Ascending aorta (tissue), 2 donors: ENCODE measurements at regions of chr10 and their contacts with region 1.

Region 1: DNA sequence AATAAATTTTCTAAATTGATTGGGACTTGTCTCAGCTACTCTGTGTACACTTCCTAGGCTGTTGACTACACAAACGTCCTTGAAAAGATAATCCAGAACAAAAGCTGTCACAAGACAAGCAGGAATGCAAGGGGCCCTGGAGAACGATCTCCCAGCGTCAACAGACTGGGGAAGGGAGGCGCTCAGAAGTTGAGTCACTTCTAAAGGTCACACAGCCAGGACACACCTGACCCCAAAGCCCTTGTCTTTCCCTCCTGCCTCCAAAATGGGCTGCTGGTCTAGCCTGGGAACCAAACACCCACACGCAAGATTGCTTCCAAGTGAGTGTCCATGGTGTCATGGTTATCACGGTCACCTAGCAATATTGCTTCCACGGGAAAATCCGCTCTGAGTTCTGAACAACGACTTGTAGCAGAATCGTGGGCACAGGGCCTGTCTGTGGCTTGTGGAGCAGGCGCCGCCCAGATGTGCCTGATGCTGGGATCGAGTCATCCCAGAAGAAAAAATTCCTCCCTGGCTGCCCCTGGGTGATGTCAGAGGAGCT is 49.8 kb downstream of the SPOCK2 start:
- DNase-seq: no peak
- H3K4me3 ChIP-seq: no peak overlapping the region
- H3K27ac ChIP-seq: no peak overlapping the region
- H3K4me1 ChIP-seq: no peaks in the 10 kb centered on the region
- H3K27me3 ChIP-seq: no peaks in the 10 kb centered on the region
- CTCF ChIP-seq: no peak

Region 2: DNA sequence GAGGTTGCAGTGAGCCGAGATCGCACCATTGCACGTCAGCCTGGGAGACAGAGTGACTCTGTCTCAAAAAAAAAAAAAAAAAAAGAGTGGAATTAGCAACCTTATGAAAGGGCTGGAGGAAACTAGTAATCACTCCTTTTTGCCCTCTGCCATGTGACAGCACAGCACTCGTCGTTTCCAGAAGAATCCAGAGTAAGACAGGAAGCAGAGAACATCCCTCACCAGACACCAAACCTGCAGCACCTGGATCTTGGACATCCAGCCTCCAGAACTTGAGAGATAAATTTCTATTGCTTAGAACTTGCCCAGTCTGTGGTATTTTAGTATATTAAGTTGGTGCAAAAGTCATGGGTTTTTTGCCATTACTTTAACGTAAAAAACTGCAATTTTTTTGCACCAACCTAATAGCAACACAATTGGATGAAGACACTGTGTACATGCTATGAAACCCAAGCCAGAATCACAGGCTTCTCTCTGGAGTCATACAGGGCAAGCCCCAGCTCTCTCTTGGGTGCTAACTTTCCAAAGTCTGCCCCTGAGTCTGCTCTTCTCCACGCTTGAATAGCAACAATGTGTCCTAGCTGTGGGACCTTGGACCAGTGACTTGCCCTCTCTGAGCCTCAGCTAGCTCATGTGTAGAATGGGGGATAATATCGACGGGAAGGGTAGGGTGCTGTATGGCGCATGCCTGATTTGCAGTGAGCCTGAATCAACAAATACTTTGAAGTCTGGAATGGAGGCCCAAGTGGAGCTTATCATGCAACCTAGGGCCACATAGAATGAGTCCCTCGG is 19.2 kb before region 1 on chr10:
- intact Hi-C with region 1: loop called (anchors 2 kb)
- DNase-seq: no peak
- H3K4me3 ChIP-seq: no peak overlapping the region
- H3K27ac ChIP-seq: no peak overlapping the region
- H3K4me1 ChIP-seq: peaks cover 3 to 40% of the 10 kb centered on the region in 2 donors
- H3K27me3 ChIP-seq: no peaks in the 10 kb centered on the region
- CTCF ChIP-seq: no peak

Region 3: GRCh38 chr10:72024596-72024995 is 13.9 kb before region 1 on chr10:
- intact Hi-C with region 1: loop called (anchors 2 kb)
- DNase-seq: no peak
- H3K4me3 ChIP-seq: no peak overlapping the region
- H3K27ac ChIP-seq: no peak overlapping the region
- H3K4me1 ChIP-seq: peaks cover 0 to 17% of the 10 kb centered on the region in 2 donors
- H3K27me3 ChIP-seq: no peaks in the 10 kb centered on the region
- CTCF ChIP-seq: no peak

Region 4: GRCh38 chr10:72292223-72292691 is 253.7 kb after region 1 on chr10:
- intact Hi-C with region 1: no loop called
- DNase-seq: no peak
- H3K4me3 ChIP-seq: no peak overlapping the region
- H3K27ac ChIP-seq: no peak overlapping the region
- H3K4me1 ChIP-seq: peaks cover 0 to 8% of the 10 kb centered on the region in 2 donors
- H3K27me3 ChIP-seq: no peaks in the 10 kb centered on the region
- CTCF ChIP-seq: no peak